Heart right ventricle (tissue), 16 donors: ENCODE measurements at regions of chr20 and their contacts with region 1.

Region 1: DNA sequence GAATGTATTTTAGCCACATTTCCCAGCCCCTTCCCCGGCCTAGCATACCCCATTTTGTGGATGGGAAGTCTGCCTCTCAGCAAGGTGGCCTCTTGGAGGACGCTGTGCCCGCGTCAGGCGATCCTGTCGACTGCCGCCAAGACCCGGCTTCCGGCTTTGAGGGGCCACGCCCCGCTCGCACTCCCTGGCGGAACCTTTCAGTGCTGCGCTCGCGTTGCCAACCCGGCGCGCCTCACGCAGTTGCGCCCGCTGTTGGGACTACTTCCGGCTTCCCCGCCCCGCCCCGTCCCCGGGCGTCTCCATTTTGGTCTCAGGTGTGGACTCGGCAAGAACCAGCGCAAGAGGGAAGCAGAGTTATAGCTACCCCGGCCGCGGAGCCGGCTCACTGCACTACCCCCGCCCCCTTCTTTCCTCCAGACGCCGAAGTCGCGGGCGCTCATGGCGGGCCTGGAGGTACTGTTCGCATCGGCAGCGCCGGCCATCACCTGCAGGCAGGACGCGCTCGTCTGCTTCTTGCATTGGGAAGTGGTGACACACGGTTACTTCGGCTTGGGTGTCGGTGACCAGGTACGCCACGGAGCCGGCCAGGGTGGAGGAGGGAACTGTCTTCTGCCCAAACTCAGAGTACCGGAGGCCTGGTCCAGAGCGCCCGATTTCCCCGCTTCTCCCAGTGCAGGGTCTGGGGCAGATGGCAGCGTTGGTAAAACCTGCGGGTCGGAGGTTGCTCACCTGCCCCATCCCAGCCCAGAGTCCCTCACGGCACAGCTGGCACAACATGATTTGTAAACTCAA is at the start of gene PSMF1:
- DNase-seq: peak; percentile 93 to 95
- ATAC-seq: peak; percentile 98 to 99 (median 99)
- H3K4me3 ChIP-seq: peak within 1 kb of the TSS; percentile 72 to 100 (median 92)
- H3K27ac ChIP-seq: peak within 1 kb of the TSS in 9 of 10 donors; percentile 64 to 91 (median 85)
- H3K4me1 ChIP-seq: peaks cover 15 to 56% (median 50%) of the 10 kb centered on the region in 9 donors
- H3K27me3 ChIP-seq: no peaks in the 10 kb centered on the region
- CTCF ChIP-seq: peak in 6 of 9 donors; percentile 10 to 34 (median 24)
- total RNA-seq, gene PSMF1: 105 to 181 (median 129) TPM

Region 2: DNA sequence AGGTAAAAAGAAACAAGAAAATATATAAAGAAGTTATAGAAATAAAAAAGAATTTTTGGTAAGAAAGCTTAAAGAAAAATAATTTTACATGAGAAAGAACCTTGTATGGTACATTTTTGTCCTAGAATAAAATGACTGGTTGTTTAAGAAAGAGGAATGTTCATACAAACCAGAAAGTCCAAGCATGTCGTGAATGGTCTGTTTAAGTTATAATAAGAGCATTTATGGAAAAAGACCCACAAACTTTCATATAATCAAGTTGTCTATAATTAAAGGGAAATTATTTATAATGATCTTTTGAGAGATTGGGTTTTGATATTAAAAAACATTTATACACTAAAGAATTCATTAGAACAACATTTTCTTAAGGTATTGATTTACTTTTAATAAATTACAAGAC is 312.8 kb before region 1 on chr20:
- intact Hi-C with region 1: no loop called
- DNase-seq: no peak
- ATAC-seq: no peak
- H3K4me3 ChIP-seq: no peak overlapping the region
- H3K27ac ChIP-seq: no peak overlapping the region
- H3K4me1 ChIP-seq: no peaks in the 10 kb centered on the region
- H3K27me3 ChIP-seq: peaks cover 0 to 31% (median 17%) of the 10 kb centered on the region in 7 donors
- CTCF ChIP-seq: no peak

Region 3: DNA sequence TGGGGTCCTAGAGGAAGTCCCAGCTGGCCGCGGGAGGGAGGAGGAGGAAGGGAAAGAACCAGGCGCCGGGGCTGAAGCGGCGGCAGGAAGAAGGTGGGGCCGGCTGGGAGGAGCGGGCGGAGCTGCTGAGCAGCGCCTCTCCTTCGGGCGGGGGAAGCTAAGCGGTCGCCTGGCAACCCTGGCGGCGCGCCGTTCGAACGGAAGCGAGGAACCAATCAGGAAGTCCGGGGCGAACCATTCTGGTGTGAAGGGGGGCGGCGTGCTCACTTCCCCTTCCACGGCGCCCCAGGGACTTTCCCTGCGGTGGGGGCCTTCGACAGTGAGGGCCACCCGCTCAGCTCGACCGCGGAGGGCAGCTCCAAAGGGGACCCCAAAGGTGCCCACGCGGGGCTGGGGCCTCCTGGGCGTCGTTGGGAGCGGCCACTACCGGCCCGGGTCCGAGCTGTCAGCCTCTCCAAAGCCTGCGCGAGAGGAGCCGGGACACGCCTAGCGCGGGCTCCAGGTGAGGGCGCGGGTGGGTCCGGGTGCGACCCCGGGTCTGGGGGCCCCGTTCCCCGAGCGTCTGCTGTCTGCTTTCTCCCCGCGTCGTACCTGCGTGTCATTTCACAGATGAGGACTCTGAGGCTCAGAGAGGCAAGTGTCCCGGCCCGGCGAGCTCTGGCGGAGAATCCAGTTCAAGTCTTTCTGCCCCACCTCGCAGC is 284.9 kb before region 1 on chr20 and contains the start of gene FAM110A:
- intact Hi-C with region 1: loop called in 1 of 10 experiments (anchors 10 kb)
- DNase-seq: peak; percentile 98
- ATAC-seq: peak; percentile 97 to 98 (median 98)
- H3K4me3 ChIP-seq: peak within 1 kb of the TSS; percentile 68 to 89 (median 82)
- H3K27ac ChIP-seq: peak within 1 kb of the TSS; percentile 14 to 95 (median 90)
- H3K4me1 ChIP-seq: peaks cover 8 to 63% (median 25%) of the 10 kb centered on the region in 9 donors
- H3K27me3 ChIP-seq: no peaks in the 10 kb centered on the region
- CTCF ChIP-seq: no peak
- total RNA-seq, gene FAM110A: 0.99 to 5.9 (median 1.9) TPM

Region 4: DNA sequence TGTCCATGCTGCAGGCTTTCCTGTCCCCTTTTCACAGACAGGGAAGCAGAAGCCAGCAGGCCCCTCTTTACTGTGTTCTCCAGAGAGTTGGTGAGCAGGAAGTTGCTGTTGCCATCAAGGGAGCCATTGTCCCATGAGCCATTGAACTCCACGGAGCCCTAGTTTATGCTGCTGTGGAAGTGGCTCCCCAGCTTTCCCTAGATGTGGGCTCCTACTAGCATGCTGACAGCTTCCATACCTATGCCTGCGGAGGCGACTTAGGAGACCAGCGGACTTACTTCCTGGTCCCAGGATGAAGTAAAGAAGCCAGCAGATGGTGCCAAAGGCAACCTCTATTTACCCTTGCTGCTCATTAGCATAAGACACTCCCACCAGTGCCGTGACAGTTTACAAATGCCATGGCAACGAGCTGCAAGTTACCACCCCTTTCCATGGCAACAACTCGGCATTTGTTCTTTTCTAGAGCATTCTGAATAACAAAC is 305.1 kb after region 1 on chr20:
- intact Hi-C with region 1: no loop called
- DNase-seq: no peak
- ATAC-seq: no peak
- H3K4me3 ChIP-seq: no peak overlapping the region
- H3K27ac ChIP-seq: no peak overlapping the region
- H3K4me1 ChIP-seq: no peaks in the 10 kb centered on the region
- H3K27me3 ChIP-seq: peaks cover 0 to 34% (median 11%) of the 10 kb centered on the region in 7 donors
- CTCF ChIP-seq: peak in 1 of 9 donors; percentile 14

Region 5: GRCh38 chr20:1466211-1467081 is 347.9 kb after region 1 on chr20 and contains the start of gene NSFL1C:
- intact Hi-C with region 1: loop called in 3 of 10 experiments (anchors 2 to 5 kb)
- DNase-seq: peak; percentile 94 to 96
- ATAC-seq: peak; percentile 96 to 99 (median 98)
- H3K4me3 ChIP-seq: peak within 1 kb of the TSS; percentile 79 to 99 (median 95)
- H3K27ac ChIP-seq: peak within 1 kb of the TSS; percentile 73 to 96 (median 92)
- H3K4me1 ChIP-seq: peaks cover 0 to 67% (median 43%) of the 10 kb centered on the region in 9 donors
- H3K27me3 ChIP-seq: no peaks in the 10 kb centered on the region
- CTCF ChIP-seq: peak; percentile 87 to 100 (median 99)
- total RNA-seq, gene NSFL1C: 54.6 to 75.6 (median 63.8) TPM